B cell (primary cell): ENCODE measurements at regions of chr4 and their contacts with region 1.

Region 1: GRCh38 chr4:143335979-143336780 is 496 bp upstream of the GAB1 start:
- DNase-seq: peak; percentile 69
- ATAC-seq: peak; percentile 56
- H3K4me3 ChIP-seq: peak overlapping the region; percentile 42 to 86 (median 73)
- H3K4me3 Mint-ChIP-seq: peak overlapping the region; percentile 96
- H3K27ac ChIP-seq: peak overlapping the region; percentile 46 to 76
- H3K27ac Mint-ChIP-seq: peak overlapping the region; percentile 87
- H3K4me1 ChIP-seq: peaks cover 12 to 17% of the 10 kb centered on the region in 2 donors
- H3K4me1 Mint-ChIP-seq: peaks cover 24% of the 10 kb centered on the region
- H3K27me3 ChIP-seq: peaks cover 0 to 9% (median 0%) of the 10 kb centered on the region in 4 experiments
- H3K27me3 Mint-ChIP-seq: peaks cover 23% of the 10 kb centered on the region
- CTCF ChIP-seq: no peak

Region 2: DNA sequence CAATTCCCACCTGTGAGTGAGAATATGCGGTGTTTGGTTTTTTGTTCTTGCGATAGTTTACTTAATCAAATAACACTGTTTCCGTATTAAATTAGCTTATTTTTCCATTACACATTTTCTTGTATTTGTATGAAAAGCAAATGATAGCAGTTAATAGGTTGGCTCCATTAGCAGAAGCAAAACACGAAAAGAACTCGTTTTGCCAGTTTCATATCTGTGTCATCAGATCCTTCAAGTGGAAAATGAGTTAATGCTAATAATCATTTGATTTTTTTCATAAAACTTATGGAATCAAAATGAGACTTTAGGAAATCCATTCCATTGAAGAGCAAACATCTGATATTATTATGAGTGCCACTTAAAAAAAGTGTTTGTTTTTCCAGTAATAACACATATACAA is 336.3 kb before region 1 on chr4:
- CTCF ChIA-PET with region 1: no interaction called
- POLR2A ChIA-PET with region 1: no interaction called
- intact Hi-C with region 1: no loop called
- DNase-seq: no peak
- ATAC-seq: no peak
- H3K4me3 ChIP-seq: no peak overlapping the region
- H3K4me3 Mint-ChIP-seq: no peak overlapping the region
- H3K27ac ChIP-seq: no peak overlapping the region
- H3K27ac Mint-ChIP-seq: no peak overlapping the region
- H3K4me1 ChIP-seq: no peaks in the 10 kb centered on the region
- H3K4me1 Mint-ChIP-seq: no peaks in the 10 kb centered on the region
- H3K27me3 ChIP-seq: no peaks in the 10 kb centered on the region
- H3K27me3 Mint-ChIP-seq: peaks cover 6% of the 10 kb centered on the region
- CTCF ChIP-seq: no peak

Region 3: DNA sequence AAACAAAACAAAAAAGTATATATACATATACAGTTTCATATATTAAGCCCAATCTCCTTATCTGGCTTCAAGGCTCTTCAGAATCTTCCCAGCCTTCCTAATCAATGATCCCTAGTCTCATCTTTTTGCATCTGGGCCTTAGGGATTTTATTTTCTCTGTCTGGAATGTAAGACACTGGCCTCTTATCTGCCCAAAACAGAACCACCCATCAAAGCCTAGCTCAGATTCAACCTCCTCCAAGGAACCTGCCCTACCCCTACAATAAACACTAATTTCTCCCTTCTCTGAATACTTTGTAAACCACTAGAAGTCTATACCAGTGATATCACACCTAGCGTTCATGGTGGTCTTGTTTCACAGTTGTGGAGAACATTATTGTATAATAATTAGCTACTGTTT is 22.7 kb before region 1 on chr4:
- CTCF ChIA-PET with region 1: no interaction called
- POLR2A ChIA-PET with region 1: no interaction called
- intact Hi-C with region 1: no loop called
- DNase-seq: no peak
- ATAC-seq: no peak
- H3K4me3 ChIP-seq: no peak overlapping the region
- H3K4me3 Mint-ChIP-seq: no peak overlapping the region
- H3K27ac ChIP-seq: no peak overlapping the region
- H3K27ac Mint-ChIP-seq: no peak overlapping the region
- H3K4me1 ChIP-seq: no peaks in the 10 kb centered on the region
- H3K4me1 Mint-ChIP-seq: no peaks in the 10 kb centered on the region
- H3K27me3 ChIP-seq: no peaks in the 10 kb centered on the region
- H3K27me3 Mint-ChIP-seq: peaks cover 3% of the 10 kb centered on the region
- CTCF ChIP-seq: no peak

Region 4: GRCh38 chr4:143358923-143359643 is 22.9 kb after region 1 on chr4:
- CTCF ChIA-PET with region 1: interaction called, 7 read pairs
- POLR2A ChIA-PET with region 1: interaction called, 3 read pairs
- intact Hi-C with region 1: loop called (anchors 2 kb)
- DNase-seq: peak; percentile 81
- ATAC-seq: peak; percentile 88
- H3K4me3 ChIP-seq: peak overlapping the region; percentile 2 to 43 (median 25)
- H3K4me3 Mint-ChIP-seq: peak overlapping the region; percentile 76
- H3K27ac ChIP-seq: peak overlapping the region; percentile 78 to 90
- H3K27ac Mint-ChIP-seq: peak overlapping the region; percentile 83
- H3K4me1 ChIP-seq: peaks cover 35 to 52% of the 10 kb centered on the region in 2 donors
- H3K4me1 Mint-ChIP-seq: peaks cover 51% of the 10 kb centered on the region
- H3K27me3 ChIP-seq: no peaks in the 10 kb centered on the region
- H3K27me3 Mint-ChIP-seq: no peaks in the 10 kb centered on the region
- CTCF ChIP-seq: no peak

Region 5: DNA sequence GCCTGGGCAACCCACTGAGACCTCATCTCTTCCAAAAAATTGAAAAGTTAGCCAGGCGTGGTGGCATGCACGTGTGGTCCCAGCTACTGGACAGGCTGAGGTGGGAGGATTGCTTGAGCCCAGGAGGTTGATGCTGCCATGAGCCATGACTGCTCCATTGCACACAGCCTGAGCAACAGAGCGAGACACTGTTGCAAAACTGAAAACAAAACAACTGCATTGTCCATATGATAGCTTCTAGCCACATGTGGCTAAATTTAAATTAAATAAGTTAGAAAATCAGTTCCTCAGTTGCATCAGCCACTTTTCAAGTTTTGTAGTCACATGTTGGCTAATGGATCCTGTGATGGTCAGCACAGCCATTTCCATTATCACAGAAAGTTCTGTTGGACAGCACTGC is 68.4 kb after region 1 on chr4:
- CTCF ChIA-PET with region 1: no interaction called
- POLR2A ChIA-PET with region 1: no interaction called
- intact Hi-C with region 1: loop called (anchors 2 kb)
- DNase-seq: peak; percentile 39
- ATAC-seq: peak; percentile 71
- H3K4me3 ChIP-seq: peak overlapping the region in 1 of 5 experiments; percentile 23
- H3K4me3 Mint-ChIP-seq: peak overlapping the region; percentile 76
- H3K27ac ChIP-seq: peak overlapping the region; percentile 42 to 55
- H3K27ac Mint-ChIP-seq: peak overlapping the region; percentile 83
- H3K4me1 ChIP-seq: peaks cover 43 to 47% of the 10 kb centered on the region in 2 donors
- H3K4me1 Mint-ChIP-seq: peaks cover 45% of the 10 kb centered on the region
- H3K27me3 ChIP-seq: no peaks in the 10 kb centered on the region
- H3K27me3 Mint-ChIP-seq: no peaks in the 10 kb centered on the region
- CTCF ChIP-seq: no peak

Region 6: GRCh38 chr4:143513306-143514168 is 177.4 kb after region 1 on chr4 and contains the start of gene SMARCA5:
- CTCF ChIA-PET with region 1: no interaction called
- POLR2A ChIA-PET with region 1: no interaction called
- intact Hi-C with region 1: loop called (anchors 1 kb)
- DNase-seq: peak; percentile 99
- ATAC-seq: peak; percentile 88
- H3K4me3 ChIP-seq: peak within 1 kb of the TSS; percentile 81 to 97 (median 93)
- H3K4me3 Mint-ChIP-seq: peak within 1 kb of the TSS; percentile 100
- H3K27ac ChIP-seq: peak within 1 kb of the TSS; percentile 94 to 99
- H3K27ac Mint-ChIP-seq: peak within 1 kb of the TSS; percentile 100
- H3K4me1 ChIP-seq: peaks cover 28 to 29% of the 10 kb centered on the region in 2 donors
- H3K4me1 Mint-ChIP-seq: peaks cover 39% of the 10 kb centered on the region
- H3K27me3 ChIP-seq: no peaks in the 10 kb centered on the region
- H3K27me3 Mint-ChIP-seq: peaks cover 8% of the 10 kb centered on the region
- CTCF ChIP-seq: no peak
- total RNA-seq, gene SMARCA5: 48.7 and 53.1 TPM in 2 replicates